ENCODE measurements at regions of chr6 and their contacts with region 1.

Region 1: DNA sequence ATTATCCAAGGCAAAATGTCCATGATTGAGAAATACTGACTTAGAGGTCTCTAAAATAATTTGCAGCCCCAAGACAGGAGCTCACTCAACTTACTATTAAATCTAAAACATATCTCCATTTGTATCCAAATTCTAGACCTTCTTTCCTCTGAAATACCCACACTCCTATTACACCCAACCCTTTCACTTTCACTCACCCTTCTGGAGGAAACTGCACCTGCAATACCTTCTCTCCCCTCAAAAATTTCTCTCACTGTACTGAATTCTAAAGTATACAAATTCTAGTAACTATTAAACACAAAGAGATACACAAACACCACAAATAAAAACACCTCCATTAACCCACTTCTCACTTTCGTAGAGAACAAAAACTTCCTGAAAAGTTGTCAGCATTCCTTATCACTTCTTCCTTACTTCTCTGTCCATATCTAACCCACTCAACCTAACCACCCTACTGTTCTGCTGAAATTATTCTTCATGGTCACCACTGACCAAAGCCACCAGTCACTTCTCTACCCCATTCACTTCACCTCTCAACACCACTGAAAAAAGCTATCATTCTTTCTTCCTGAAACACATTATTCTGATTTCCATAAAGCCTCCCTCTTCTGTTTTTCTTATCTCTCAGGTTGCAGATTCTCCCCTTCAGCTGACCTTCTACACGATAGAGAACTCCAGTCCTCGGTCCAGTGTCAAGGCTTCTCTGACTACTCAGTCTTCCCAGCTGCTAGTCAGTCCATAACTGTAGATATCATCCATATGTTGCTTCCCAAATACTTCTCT is 12.0 kb downstream of the LMBRD1 start:
- DNase-seq: no peak
- ATAC-seq: peak; percentile 52
- H3K4me3 ChIP-seq: no peak overlapping the region
- H3K4me3 Mint-ChIP-seq: no peak overlapping the region
- H3K27ac ChIP-seq: no peak overlapping the region
- H3K27ac Mint-ChIP-seq: no peak overlapping the region
- H3K4me1 ChIP-seq: peaks cover 4% of the 10 kb centered on the region
- H3K4me1 Mint-ChIP-seq: peaks cover 57% of the 10 kb centered on the region
- H3K27me3 ChIP-seq: no peaks in the 10 kb centered on the region
- H3K27me3 Mint-ChIP-seq: no peaks in the 10 kb centered on the region
- CTCF ChIP-seq: no peak

Region 2: DNA sequence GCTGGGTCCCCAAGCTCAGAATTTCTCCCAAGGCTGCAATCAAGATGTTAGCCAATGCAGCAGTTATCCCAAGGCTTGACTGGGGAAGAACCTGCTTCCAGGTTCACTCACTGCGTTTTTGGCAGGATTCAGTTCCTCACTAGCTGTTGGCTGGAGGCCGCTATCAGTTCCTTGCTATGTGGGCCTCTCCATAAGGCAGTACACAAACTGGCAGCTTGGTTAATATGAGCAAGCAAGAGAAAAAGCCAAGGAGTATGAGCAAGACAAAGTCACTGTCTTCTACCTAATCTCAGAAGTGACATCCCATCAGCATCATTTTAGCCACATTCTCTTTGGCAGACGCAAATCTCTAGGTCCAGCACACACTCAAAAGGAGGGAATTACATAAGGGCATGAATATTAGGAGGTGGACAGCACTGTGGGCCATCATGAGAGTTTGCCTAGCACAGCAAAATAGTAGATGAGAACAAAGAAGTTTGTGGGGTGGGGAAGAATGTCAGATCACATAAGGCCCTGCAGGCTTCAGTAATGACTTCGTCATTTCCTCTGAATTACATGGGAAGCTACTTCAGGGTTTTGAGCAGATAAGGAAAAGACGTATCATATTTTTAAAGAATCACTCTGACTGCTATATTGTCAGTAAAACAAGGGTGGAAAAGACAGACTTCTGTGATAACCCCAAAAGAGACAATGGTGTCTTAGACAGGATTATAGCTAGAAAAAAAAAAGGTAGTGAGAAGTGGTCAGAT is 13.5 kb before region 1 on chr6:
- CTCF ChIA-PET with region 1: no interaction called
- POLR2A ChIA-PET with region 1: no interaction called
- intact Hi-C with region 1: loop called in 1 of 2 experiments (anchors 2 kb)
- DNase-seq: no peak
- ATAC-seq: no peak
- H3K4me3 ChIP-seq: no peak overlapping the region
- H3K4me3 Mint-ChIP-seq: no peak overlapping the region
- H3K27ac ChIP-seq: no peak overlapping the region
- H3K27ac Mint-ChIP-seq: no peak overlapping the region
- H3K4me1 ChIP-seq: peaks cover 5% of the 10 kb centered on the region
- H3K4me1 Mint-ChIP-seq: peaks cover 57% of the 10 kb centered on the region
- H3K27me3 ChIP-seq: no peaks in the 10 kb centered on the region
- H3K27me3 Mint-ChIP-seq: no peaks in the 10 kb centered on the region
- CTCF ChIP-seq: no peak

Region 3: DNA sequence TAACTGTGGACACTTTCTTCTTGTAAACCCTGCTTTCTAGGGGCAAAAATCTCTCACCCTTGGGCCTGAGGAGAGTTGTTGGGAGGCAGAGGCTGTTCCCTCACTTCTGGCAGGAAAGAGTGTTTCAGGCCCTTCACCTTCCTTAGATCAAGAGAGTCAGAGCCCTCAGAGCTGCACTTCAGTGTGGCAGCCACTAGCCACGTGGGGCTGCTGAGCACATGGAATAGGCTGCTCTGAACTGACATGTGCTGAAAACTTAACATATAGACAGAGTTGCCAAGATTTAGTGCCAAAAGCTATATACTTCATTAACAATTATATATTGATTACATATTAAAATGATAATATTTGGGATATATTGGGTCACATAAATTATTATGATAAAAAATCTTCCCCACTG is 16.4 kb after region 1 on chr6:
- CTCF ChIA-PET with region 1: no interaction called
- POLR2A ChIA-PET with region 1: no interaction called
- intact Hi-C with region 1: no loop called
- DNase-seq: no peak
- ATAC-seq: no peak
- H3K4me3 ChIP-seq: no peak overlapping the region
- H3K4me3 Mint-ChIP-seq: no peak overlapping the region
- H3K27ac ChIP-seq: no peak overlapping the region
- H3K27ac Mint-ChIP-seq: no peak overlapping the region
- H3K4me1 ChIP-seq: peaks cover 8% of the 10 kb centered on the region
- H3K4me1 Mint-ChIP-seq: peaks cover 19% of the 10 kb centered on the region
- H3K27me3 ChIP-seq: no peaks in the 10 kb centered on the region
- H3K27me3 Mint-ChIP-seq: no peaks in the 10 kb centered on the region
- CTCF ChIP-seq: no peak

Region 4: GRCh38 chr6:69835414-69836179 is 50.8 kb after region 1 on chr6:
- CTCF ChIA-PET with region 1: no interaction called
- POLR2A ChIA-PET with region 1: interaction called, 3 read pairs
- intact Hi-C with region 1: loop called in 1 of 2 experiments (anchors 10 kb)
- DNase-seq: peak in 2 of 9 experiments; percentile 54 to 64
- ATAC-seq: peak; percentile 75
- H3K4me3 ChIP-seq: no peak overlapping the region
- H3K4me3 Mint-ChIP-seq: no peak overlapping the region
- H3K27ac ChIP-seq: no peak overlapping the region
- H3K27ac Mint-ChIP-seq: no peak overlapping the region
- H3K4me1 ChIP-seq: no peaks in the 10 kb centered on the region
- H3K4me1 Mint-ChIP-seq: peaks cover 5% of the 10 kb centered on the region
- H3K27me3 ChIP-seq: peaks cover 0 to 3% of the 10 kb centered on the region in 2 experiments
- H3K27me3 Mint-ChIP-seq: peaks cover 13% of the 10 kb centered on the region
- CTCF ChIP-seq: peak; percentile 85

Region 5: GRCh38 chr6:71367756-71368155 is 1583.0 kb after region 1 on chr6:
- CTCF ChIA-PET with region 1: no interaction called
- POLR2A ChIA-PET with region 1: no interaction called
- intact Hi-C with region 1: no loop called
- DNase-seq: no peak
- ATAC-seq: no peak
- H3K4me3 ChIP-seq: no peak overlapping the region
- H3K4me3 Mint-ChIP-seq: no peak overlapping the region
- H3K27ac ChIP-seq: no peak overlapping the region
- H3K27ac Mint-ChIP-seq: no peak overlapping the region
- H3K4me1 ChIP-seq: no peaks in the 10 kb centered on the region
- H3K4me1 Mint-ChIP-seq: peaks cover 4% of the 10 kb centered on the region
- H3K27me3 ChIP-seq: no peaks in the 10 kb centered on the region
- H3K27me3 Mint-ChIP-seq: peaks cover 12% of the 10 kb centered on the region
- CTCF ChIP-seq: no peak

Measured in CD8-positive, alpha-beta T cell (primary cell).